ENCODE measurements at regions of chr9 and their contacts with region 1.

Region 1: DNA sequence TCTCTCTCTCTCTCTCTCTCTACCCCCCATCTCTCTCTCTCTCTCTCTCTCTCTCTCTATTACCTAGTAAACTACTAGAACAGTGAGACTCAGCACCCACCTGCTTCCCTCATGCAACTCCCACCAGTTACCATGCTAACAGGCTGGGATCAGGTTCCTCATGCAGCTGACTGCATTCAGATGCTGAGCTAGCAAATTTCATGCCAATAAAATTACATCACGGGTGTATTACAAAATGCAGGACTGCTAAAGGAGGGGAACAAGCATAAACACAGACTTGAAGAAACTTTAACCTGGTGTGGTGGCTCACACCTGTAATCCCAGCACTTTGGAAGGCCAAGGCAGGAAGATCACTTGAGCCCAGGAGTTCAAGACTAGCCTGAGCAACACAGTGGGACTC is 76.0 kb downstream of the CEMIP2 start:
- DNase-seq: no peak
- ATAC-seq: no peak
- H3K4me3 Mint-ChIP-seq: no peak overlapping the region
- H3K27ac Mint-ChIP-seq: peak overlapping the region in 3 of 10 donors; percentile 53 to 71 (median 56)
- H3K4me1 Mint-ChIP-seq: peaks cover 8 to 29% (median 25%) of the 10 kb centered on the region in 4 donors
- H3K27me3 Mint-ChIP-seq: no peaks in the 10 kb centered on the region

Region 2: GRCh38 chr9:71662057-71662456 is 30.3 kb before region 1 on chr9:
- POLR2A ChIA-PET with region 1: no interaction called
- DNase-seq: no peak
- ATAC-seq: no peak
- H3K4me3 Mint-ChIP-seq: no peak overlapping the region
- H3K27ac Mint-ChIP-seq: no peak overlapping the region
- H3K4me1 Mint-ChIP-seq: peaks cover 0 to 1% (median 0%) of the 10 kb centered on the region in 4 donors
- H3K27me3 Mint-ChIP-seq: peaks cover 0 to 7% (median 0%) of the 10 kb centered on the region in 5 donors

Region 3: DNA sequence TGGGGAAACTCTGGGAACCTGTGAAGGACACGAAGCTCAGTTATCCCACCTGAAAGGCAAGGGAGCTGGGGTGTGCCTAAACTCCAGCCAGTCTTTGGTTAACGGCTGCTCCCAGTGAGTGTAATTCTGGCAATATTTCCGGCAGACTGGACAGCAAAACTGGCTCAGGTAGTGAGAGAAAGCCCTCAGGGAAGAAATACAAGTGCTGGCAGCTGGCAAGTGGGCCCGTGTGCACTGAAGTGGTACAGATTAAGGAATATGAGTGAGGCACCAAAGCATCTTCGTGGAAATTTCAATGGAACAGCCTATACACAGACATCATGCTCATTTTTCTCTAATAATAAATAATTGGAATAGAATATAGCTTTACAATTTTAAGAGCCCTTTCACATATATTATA is 162.5 kb after region 1 on chr9:
- POLR2A ChIA-PET with region 1: no interaction called
- DNase-seq: no peak
- ATAC-seq: no peak
- H3K4me3 Mint-ChIP-seq: no peak overlapping the region
- H3K27ac Mint-ChIP-seq: no peak overlapping the region
- H3K4me1 Mint-ChIP-seq: peaks cover 0 to 3% (median 1%) of the 10 kb centered on the region in 4 donors
- H3K27me3 Mint-ChIP-seq: no peaks in the 10 kb centered on the region

Region 4: GRCh38 chr9:72029986-72030385 is 337.6 kb after region 1 on chr9:
- POLR2A ChIA-PET with region 1: interaction called, 13 read pairs
- DNase-seq: no peak
- ATAC-seq: no peak
- H3K4me3 Mint-ChIP-seq: no peak overlapping the region
- H3K27ac Mint-ChIP-seq: no peak overlapping the region
- H3K4me1 Mint-ChIP-seq: no peaks in the 10 kb centered on the region
- H3K27me3 Mint-ChIP-seq: peaks cover 0 to 8% (median 2%) of the 10 kb centered on the region in 5 donors

Measured in naive thymus-derived CD8-positive, alpha-beta T cell (primary cell).